Endothelial cell of umbilical vein (primary cell): ENCODE measurements at regions of chr2 and their contacts with region 1.

Region 1: DNA sequence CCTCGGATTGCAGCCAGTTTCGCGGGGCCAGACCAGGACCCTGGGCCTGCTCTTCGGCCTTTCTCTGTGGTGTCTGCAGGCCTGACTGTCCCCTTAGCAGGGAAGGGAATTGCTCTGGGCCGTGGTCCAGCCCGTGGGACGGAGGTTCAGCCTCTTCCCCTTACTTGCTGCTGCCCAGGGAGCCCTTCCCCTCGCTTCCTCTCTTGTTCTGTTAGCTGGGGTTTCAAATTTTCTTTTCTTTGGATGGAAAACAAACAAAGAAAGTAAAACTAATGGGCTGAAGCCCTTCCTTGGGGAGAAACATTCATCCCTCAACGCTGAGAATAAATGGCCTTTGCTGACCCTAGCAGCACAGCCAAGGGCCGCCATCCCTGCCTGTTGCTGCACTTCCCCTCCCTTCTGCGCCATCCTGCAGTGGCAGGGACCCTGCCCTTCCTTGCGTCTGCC is 52.4 kb downstream of the ASAP2 start:
- DNase-seq: peak; percentile 68
- H3K4me3 ChIP-seq: no peak overlapping the region
- H3K27ac ChIP-seq: peak overlapping the region; percentile 42
- H3K4me1 ChIP-seq: peaks cover 81% of the 10 kb centered on the region
- H3K27me3 ChIP-seq: no peaks in the 10 kb centered on the region
- CTCF ChIP-seq: no peak
- POLR2A ChIP-seq: no peak

Region 2: DNA sequence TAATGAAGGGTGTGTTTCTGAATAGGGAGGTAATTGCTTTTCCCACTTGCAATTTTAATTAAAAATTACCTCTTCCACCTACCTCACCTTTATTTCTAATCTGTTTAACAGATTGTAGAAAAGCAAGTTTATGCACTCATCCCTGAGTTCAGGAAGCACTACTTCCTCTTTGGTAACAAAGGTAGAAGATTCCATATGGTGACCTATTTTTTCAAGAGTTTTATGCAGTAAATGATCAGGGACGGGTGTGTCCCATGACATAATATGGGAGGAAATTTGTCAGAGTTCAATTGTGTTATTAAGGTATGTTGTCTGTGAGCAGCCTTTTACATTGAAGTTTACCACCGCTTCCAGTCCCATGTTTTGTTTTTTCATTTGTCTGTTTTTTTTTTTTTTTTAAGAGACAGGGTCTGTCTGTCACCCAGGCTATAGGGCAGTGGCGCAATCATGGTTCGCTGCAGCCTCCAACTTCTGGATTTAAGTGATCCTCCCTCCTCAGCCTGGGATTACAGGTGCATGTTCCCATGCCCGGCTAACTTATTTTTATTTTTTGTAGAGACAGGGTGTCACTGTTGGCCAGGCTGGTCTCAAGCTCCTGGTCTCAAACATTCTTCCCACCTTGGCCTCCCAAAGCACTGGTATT is 15.8 kb after region 1 on chr2:
- CTCF ChIA-PET with region 1: interaction called, 3 read pairs
- POLR2A ChIA-PET with region 1: no interaction called
- dilution Hi-C with region 1: no loop called
- intact Hi-C with region 1: loop called (anchors 1 kb)
- DNase-seq: peak; percentile 27
- H3K4me3 ChIP-seq: no peak overlapping the region
- H3K27ac ChIP-seq: peak overlapping the region; percentile 44
- H3K4me1 ChIP-seq: peaks cover 23% of the 10 kb centered on the region
- H3K27me3 ChIP-seq: no peaks in the 10 kb centered on the region
- CTCF ChIP-seq: no peak
- POLR2A ChIP-seq: no peak

Region 3: DNA sequence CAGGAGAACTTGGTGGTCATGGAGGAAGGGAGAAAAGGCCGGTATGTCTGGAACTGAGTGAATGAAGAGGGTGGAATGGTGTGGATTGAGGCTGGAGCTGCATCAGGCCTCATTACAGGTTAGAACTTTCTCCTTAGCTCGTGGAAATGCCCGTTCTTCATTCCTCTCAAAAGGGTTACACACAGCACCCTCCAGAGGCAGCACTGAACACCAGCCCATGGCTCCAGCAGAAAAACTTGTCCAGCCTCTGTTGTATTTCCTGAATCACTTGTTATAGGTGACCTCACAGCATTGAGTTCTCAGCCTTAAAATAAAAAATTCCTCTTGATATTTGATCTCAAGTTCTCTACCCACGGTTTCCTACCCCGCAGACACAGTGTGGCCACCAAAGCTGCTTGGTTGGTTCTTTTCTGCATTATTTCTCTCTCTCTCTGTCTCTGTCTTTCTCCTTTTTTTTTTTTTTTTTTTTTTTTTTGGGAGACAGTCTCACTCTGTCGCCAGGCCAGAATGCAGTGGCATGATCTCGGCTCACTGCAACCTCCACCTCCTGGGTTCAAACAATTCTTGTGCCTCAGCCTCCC is 74.7 kb after region 1 on chr2:
- CTCF ChIA-PET with region 1: interaction called, 7 read pairs
- POLR2A ChIA-PET with region 1: no interaction called
- dilution Hi-C with region 1: no loop called
- intact Hi-C with region 1: loop called (anchors 1 kb)
- DNase-seq: peak; percentile 84
- H3K4me3 ChIP-seq: no peak overlapping the region
- H3K27ac ChIP-seq: peak overlapping the region; percentile 18
- H3K4me1 ChIP-seq: peaks cover 10% of the 10 kb centered on the region
- H3K27me3 ChIP-seq: no peaks in the 10 kb centered on the region
- CTCF ChIP-seq: peak; percentile 63 to 75
- POLR2A ChIP-seq: no peak